Posterior cingulate gyrus (tissue), 11 donors: ENCODE measurements at regions of chr12 and their contacts with region 1.

Region 1: DNA sequence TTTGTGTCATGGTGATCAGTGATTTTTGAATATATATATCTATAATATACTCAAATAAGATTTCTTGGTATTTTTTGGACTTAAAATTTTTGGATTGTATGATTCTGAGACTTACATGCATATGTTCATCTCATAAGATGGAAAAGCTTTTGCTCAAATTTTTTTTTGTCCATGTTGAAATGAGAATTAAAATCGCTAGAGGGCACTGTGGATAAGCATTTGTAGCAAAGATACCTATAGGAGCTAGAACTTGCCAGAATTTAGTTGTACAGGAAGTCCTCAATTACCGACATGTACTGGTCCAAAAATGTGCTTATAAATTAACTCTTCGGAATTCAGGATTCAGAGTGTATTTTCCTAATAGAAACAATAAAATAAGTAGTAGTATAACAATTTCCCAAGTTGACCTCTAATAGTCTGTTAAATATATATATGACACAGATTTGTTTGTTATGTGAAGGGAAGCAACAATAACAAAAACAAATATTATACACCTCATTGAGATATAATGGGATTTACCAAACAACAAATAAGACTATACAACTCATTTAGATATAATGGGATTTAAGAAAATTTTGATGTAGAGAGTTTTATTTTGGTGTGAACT is 179.6 kb downstream of the TMEM117 start:
- DNase-seq: no peak

Region 2: DNA sequence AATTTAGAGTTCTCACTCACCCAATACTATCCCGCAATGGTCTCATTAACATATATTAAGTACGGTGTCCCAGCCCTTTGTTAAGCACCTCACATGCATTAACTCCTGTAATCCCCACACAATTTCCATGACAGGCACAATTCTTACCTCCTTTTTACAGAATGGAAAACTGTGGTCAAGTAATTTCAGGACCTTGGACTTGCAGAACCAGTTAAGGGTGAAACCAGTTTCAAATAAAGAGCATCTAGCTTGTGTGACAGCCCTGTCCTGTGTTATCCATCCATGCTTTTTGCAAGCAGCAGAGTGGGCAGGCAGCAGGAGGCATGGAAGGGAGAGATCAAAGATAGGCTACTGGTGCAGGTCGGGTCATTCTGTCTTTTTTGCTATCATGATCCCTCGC is 389.9 kb after region 1 on chr12:
- intact Hi-C with region 1: no loop called
- DNase-seq: no peak

Region 3: DNA sequence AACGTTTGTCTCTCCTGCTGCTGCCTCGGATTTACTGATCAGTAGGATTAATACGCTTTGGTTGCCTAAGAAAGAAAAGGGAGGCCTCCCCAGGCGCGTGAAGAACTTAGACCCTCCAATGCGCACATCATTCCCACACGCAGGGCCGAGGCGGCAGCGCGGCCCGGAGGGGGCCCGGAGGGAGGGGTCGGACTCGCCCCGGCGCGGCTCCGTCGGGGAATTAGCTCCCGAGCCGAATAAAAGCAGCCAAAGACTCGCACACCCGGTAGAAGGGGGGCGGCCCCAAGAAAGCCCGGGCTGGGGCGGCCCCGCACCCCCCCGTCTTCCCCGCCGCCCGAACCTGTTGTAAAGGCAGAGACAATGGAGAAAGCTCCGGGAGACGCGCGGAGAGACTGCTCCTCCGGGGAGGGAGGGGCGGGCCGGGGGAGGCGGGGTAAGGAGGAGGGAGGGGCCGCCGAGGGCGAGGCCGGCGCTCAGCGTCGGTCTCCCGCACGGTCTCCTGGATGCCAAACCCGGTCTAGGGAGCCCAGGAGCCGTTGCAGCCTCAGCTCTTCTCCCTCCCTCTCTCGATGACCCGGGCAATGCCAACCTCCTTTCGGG is 860.6 kb after region 1 on chr12 and contains the start of gene NELL2:
- intact Hi-C with region 1: loop called (anchors 5 kb)
- DNase-seq: peak; percentile 20 to 94 (median 66)

Region 4: DNA sequence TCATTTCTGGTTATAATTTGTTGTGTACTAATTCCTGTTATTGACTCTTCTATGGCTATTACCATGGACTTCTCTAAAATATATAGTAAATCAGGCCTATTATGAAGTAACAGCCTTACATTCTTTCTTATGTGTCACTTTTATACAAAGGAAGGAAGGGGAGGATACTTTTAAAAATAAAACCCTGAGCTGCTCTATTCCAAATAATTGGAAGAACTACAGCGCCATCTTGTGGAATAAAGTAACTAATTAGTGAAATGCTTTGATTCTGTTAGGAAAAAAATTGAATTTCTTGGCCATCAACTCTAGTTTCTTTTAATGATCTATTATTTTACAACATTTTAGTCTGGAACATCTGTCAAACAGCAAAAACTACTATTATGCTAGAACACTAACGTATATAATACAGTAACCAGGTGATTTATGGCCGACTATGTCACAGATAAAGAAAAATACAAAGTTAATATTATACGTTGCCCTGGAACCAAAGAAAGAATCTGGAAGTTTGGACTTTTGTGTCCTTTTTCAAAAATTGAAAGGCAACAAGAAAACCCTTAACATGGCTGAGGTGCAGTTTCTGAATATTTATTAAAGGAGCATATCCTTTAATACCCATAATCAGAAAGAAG is 915.6 kb after region 1 on chr12:
- intact Hi-C with region 1: loop called (anchors 2 kb)
- DNase-seq: no peak